ENCODE measurements at regions of chr11 and their contacts with region 1.

Region 1: DNA sequence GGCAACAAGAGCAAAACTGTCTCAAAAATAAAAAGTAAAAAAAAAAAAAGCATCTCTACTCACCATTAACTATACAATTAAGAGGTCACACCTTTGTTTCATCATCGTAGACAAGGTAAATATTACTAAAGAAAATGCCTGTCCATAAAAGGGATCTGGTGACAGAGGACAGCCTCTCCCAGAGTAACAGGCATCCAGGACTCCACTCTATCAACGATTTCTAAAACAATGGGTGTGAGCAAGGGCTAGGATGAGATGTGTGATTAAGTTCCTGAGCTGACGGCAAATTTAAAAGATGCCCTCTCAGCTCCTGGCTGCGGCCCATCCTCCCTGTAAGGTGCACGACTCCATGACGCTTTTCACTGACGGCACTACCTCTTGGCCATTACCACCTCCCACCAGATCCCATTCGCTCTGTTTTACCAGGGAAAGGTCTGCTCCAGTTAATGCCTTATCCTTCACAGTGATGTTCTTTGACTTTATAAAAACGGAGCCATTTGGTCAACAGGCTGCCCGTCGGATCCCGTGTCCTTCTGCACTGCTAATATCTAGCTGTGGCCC is 2.3 kb upstream of the TMEM45B start:
- DNase-seq: peak in 1 of 2 experiments; percentile 71
- H3K4me3 ChIP-seq: no peak overlapping the region
- H3K27ac ChIP-seq: no peak overlapping the region
- H3K4me1 ChIP-seq: peaks cover 36% of the 10 kb centered on the region
- H3K27me3 ChIP-seq: no peaks in the 10 kb centered on the region
- CTCF ChIP-seq: no peak

Region 2: GRCh38 chr11:129709801-129710398 is 103.4 kb before region 1 on chr11:
- CTCF ChIA-PET with region 1: no interaction called
- POLR2A ChIA-PET with region 1: no interaction called
- intact Hi-C with region 1: no loop called
- DNase-seq: no peak
- H3K4me3 ChIP-seq: no peak overlapping the region
- H3K27ac ChIP-seq: no peak overlapping the region
- H3K4me1 ChIP-seq: peaks cover 2% of the 10 kb centered on the region
- H3K27me3 ChIP-seq: no peaks in the 10 kb centered on the region
- CTCF ChIP-seq: no peak

Region 3: DNA sequence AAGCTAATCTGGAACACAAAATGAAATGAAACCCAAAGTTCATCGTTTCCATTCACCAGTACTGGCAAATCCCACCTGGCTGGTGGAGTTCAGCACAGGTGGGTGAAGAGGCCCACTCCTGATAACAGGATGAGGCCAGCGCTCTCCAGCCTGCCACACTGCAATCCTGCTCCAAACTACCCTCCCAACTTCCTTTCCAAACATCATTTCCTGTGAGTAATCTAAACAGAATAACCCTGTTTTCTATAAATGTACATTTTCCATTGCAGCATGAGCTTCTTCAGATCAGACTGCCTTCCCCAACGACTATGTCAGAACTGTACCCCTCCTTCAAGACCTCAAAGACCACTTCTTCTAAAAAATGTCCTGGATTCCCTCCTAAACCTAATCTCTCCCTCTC is 98.0 kb after region 1 on chr11:
- CTCF ChIA-PET with region 1: no interaction called
- POLR2A ChIA-PET with region 1: no interaction called
- intact Hi-C with region 1: no loop called
- DNase-seq: no peak
- H3K4me3 ChIP-seq: no peak overlapping the region
- H3K27ac ChIP-seq: no peak overlapping the region
- H3K4me1 ChIP-seq: no peaks in the 10 kb centered on the region
- H3K27me3 ChIP-seq: no peaks in the 10 kb centered on the region
- CTCF ChIP-seq: no peak

Region 4: GRCh38 chr11:129968591-129969419 is 155.5 kb after region 1 on chr11:
- CTCF ChIA-PET with region 1: interaction called, 13 read pairs
- POLR2A ChIA-PET with region 1: no interaction called
- intact Hi-C with region 1: no loop called
- DNase-seq: no peak
- H3K4me3 ChIP-seq: no peak overlapping the region
- H3K27ac ChIP-seq: no peak overlapping the region
- H3K4me1 ChIP-seq: peaks cover 15% of the 10 kb centered on the region
- H3K27me3 ChIP-seq: no peaks in the 10 kb centered on the region
- CTCF ChIP-seq: no peak

Region 5: DNA sequence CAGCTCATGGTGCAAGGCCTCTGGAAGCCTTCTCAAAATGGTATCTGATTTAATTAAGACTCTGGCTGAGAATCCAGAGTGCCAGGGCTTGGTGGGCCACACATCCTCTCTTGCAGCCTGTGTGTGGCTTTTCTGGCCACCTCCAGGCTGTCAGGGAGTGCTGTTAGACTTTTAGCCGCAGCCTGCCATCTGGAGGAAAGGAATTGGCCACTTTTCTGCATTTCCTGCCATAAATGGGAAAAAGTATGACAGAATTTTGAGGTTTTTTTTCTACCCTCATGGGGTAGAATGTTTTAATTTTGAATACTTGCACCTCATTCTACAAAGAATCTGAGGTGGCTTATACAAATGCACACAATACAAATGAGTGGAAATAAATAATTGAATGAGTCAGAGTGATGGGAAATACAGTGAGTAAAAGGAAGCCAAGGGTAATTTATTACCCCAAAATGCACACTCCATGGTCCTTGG is 853.5 kb after region 1 on chr11:
- CTCF ChIA-PET with region 1: no interaction called
- POLR2A ChIA-PET with region 1: no interaction called
- intact Hi-C with region 1: no loop called
- DNase-seq: no peak
- H3K4me3 ChIP-seq: no peak overlapping the region
- H3K27ac ChIP-seq: no peak overlapping the region
- H3K4me1 ChIP-seq: no peaks in the 10 kb centered on the region
- H3K27me3 ChIP-seq: no peaks in the 10 kb centered on the region
- CTCF ChIP-seq: no peak

Measured in PC-9 (cell line).